Motor neuron (in vitro differentiated cells): ENCODE measurements at regions of chr19 and their contacts with region 1.

Region 1: GRCh38 chr19:41570639-41571112 is 5.3 kb upstream of the CEACAM21 start:
- ATAC-seq: peak; percentile 73 to 100 (median 84)
- H3K4me3 ChIP-seq: no peak overlapping the region
- H3K27ac ChIP-seq: no peak overlapping the region
- H3K4me1 ChIP-seq: no peaks in the 10 kb centered on the region

Region 2: DNA sequence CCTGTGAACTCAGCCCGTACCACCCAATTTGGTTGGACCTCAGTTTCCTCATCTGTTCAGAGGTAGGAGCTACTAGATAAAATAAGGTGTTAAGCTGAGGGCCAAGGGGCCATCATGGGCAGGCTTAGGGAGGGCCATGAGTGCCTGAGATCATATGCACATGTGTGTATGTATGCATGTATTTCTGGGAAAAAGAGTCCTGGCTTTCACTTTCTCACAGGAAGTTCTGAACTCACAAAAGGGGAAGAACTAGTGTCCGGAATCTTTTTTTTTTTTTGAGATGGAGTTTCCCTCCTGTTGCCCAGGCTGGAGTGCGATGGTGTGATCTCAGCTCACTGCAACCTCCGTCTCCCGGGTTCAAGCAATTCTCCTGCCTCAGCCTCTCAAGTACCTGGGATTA is 235.9 kb before region 1 on chr19:
- in situ Hi-C with region 1: no loop called
- ATAC-seq: peak in 3 of 8 experiments; percentile 78 to 98 (median 97)
- H3K4me3 ChIP-seq: no peak overlapping the region
- H3K27ac ChIP-seq: no peak overlapping the region
- H3K4me1 ChIP-seq: peaks cover 0 to 4% of the 10 kb centered on the region in 2 donors

Region 3: DNA sequence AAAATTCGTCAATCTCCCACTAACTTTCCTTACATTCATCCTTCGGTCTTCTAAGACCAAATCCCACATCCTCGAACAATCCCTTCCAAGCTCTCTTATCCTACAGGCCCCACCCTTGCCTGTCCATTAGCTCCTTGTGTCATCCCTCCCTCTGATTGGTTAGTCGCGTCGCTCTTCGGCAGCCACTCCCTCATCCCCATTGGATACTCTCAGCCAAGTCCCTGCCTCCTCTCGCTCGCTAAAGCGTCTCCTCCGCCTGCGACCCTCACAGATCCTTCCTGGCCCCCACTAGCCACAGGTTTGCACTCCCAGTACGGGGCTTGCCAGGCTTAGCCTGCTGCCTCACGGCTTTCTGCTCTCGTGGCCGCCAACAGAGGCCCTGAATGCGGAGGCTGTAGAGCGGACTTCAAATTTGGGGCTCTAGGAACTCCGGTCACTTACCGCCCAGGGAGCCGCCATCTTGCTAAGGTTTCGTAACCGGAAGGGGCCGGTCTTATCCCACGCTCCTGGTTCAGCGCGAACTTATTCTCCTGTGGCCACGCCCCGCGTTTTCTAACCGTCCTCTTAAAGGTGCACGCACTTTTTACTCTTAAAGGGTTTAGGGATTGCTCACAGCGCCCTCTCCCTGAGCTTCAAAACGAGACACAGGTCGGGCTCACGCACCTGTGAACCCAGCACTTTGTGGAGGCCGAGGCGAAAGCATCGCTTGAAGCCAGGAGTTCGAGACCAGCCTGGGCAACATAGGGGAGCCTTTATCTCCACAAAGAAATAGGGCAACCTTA is 131.0 kb before region 1 on chr19 and contains the start of gene DMAC2:
- in situ Hi-C with region 1: loop called in 3 of 9 experiments (anchors 10 to 25 kb)
- ATAC-seq: peak; percentile 98 to 99 (median 99)
- H3K4me3 ChIP-seq: peak within 1 kb of the TSS; percentile 78 to 99 (median 92)
- H3K27ac ChIP-seq: peak within 1 kb of the TSS; percentile 94
- H3K4me1 ChIP-seq: peaks cover 5 to 8% of the 10 kb centered on the region in 2 donors
- total RNA-seq, gene DMAC2: 26.5 to 47.4 (median 33.7) TPM

Region 4: DNA sequence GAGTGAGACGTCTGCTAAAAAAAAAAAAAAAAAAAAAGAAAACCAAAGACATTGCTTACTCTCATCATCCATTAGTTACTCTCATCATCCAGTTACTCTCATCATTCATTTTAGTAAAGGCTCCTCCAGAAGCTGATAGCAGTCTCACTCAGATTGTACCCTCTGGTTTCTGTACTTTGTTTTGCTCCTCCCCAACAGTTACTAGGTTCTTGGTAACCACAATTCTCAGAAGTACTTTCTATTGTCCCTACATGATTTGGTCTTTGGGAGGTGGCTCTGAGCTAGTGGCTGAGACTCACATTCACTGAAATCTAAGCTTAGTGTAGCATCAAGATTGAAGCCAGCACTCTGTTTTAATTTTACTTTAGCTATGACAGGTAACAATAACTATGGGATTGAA is 113.4 kb before region 1 on chr19:
- in situ Hi-C with region 1: loop called in 1 of 9 experiments (anchors 25 kb)
- ATAC-seq: no peak
- H3K4me3 ChIP-seq: no peak overlapping the region
- H3K27ac ChIP-seq: no peak overlapping the region
- H3K4me1 ChIP-seq: no peaks in the 10 kb centered on the region

Region 5: DNA sequence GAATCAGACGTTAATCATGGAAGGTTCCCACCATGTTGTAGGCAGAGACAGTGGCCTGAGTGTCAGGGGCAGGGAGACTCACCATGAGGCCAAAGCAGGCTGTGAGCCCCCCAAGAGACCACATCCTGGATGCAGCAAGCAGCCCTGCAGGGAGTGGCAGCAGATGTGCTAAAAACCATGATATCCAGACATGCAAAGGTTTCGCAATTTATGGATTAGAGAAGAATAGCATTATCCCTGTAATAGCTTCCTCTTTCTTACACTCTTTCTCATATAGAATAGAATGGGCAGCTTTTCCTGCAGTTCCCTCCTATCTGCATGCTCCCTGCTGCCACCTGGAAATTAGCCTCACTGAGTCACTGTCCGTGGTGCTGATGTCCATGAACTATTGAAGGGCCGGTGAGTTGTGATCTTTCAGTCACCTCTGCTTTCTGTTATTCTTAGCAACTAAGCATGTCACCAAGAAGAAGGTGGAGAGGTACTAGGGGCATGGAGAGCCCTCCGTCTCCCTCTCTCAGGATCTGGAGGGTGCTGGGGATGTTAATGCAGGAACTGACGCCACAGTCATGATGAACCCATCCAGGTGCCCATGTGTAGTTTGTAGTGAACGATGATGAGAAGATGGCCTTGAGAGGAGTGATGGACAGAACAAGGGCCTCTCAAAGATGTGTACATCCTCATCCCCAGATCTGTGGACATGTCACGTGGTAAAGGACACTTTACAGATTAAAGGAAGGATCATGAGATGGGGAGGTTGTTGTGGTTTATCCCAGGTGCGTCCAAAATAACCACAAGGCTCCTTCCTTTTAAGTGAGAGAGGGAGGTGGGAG is 46.3 kb after region 1 on chr19:
- in situ Hi-C with region 1: no loop called
- ATAC-seq: peak in 3 of 8 experiments; percentile 33 to 50 (median 47)
- H3K4me3 ChIP-seq: no peak overlapping the region
- H3K27ac ChIP-seq: no peak overlapping the region
- H3K4me1 ChIP-seq: no peaks in the 10 kb centered on the region